ENCODE measurements at regions of chr10 and their contacts with region 1.

Region 1: GRCh38 chr10:103445767-103446567 is 6.2 kb downstream of the CALHM2 start:
- DNase-seq: peak; percentile 76
- H3K4me3 ChIP-seq: no peak overlapping the region
- H3K27ac ChIP-seq: peak overlapping the region; percentile 79
- H3K4me1 ChIP-seq: peaks cover 51% of the 10 kb centered on the region
- H3K27me3 ChIP-seq: no peaks in the 10 kb centered on the region
- CTCF ChIP-seq: no peak
- POLR2A ChIP-seq: peak; percentile 50

Region 2: DNA sequence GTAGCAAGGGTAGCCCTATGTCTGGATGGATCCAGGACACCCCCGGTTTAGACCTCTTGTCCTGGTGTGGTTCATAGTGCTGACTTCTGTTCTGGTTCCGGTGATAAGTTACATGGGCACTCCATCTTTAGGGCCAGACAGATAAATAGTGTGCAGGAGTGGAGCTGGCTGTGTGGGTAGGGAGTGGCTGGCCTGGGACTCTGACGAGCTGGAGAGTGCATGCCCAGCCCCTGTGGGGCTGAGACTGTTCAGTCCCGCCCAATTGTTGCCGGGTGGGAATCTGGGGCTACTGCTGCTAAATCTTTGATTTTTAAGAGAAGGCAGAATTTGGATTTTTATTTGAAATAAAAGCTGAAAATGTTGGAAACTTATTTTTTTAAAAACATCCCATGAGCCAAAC is 22.2 kb before region 1 on chr10:
- CTCF ChIA-PET with region 1: no interaction called
- POLR2A ChIA-PET with region 1: no interaction called
- dilution Hi-C with region 1: no loop called
- intact Hi-C with region 1: loop called (anchors 2 kb)
- DNase-seq: no peak
- H3K4me3 ChIP-seq: no peak overlapping the region
- H3K27ac ChIP-seq: no peak overlapping the region
- H3K4me1 ChIP-seq: peaks cover 4% of the 10 kb centered on the region
- H3K27me3 ChIP-seq: no peaks in the 10 kb centered on the region
- CTCF ChIP-seq: no peak
- POLR2A ChIP-seq: no peak